ENCODE measurements at regions of chr9 and their contacts with region 1.

Region 1: DNA sequence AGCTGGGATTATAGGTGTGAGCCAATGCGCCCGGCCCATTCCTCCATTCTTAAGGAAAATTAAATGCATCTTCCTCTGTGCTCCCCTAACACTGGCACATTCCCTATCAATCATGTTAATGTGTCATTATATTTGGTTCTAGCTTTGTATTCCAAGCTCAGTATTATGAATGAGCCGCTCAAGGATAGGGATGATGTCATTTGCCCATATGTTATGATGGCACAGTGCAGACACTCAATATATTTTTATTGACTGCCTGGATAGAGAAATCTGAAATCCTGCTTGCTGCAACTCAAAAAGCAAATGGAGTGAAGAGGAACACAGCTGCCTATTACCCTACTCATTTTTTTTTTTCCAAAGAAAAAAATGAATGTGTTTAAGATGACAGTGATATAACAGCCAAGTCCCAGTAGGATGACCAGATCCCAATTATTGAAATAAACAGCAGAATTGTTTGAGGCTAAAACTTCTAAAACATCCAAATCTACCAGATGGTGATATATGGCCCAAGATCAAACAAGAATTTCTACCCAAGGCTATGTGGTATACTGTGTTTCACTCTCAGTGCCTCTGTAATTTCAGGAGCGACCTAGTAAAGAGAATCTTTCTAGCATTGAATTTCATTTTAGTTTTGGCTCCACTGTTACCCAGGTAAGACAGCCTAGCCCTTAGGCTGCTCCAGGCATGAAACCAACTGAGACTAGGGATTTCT is 16.3 kb downstream of the SUSD1 start:
- DNase-seq: no peak
- H3K4me3 ChIP-seq: no peak overlapping the region
- H3K4me3 Mint-ChIP-seq: no peak overlapping the region
- H3K27ac ChIP-seq: no peak overlapping the region
- H3K27ac Mint-ChIP-seq: no peak overlapping the region
- H3K4me1 ChIP-seq: no peaks in the 10 kb centered on the region
- H3K4me1 Mint-ChIP-seq: peaks cover 0 to 5% (median 2%) of the 10 kb centered on the region in 4 donors
- H3K27me3 ChIP-seq: no peaks in the 10 kb centered on the region
- H3K27me3 Mint-ChIP-seq: no peaks in the 10 kb centered on the region

Region 2: GRCh38 chr9:112218908-112219307 is 60.1 kb after region 1 on chr9:
- CTCF ChIA-PET with region 1: no interaction called
- POLR2A ChIA-PET with region 1: no interaction called
- intact Hi-C with region 1: loop called (anchors 10 kb)
- DNase-seq: peak in 1 of 5 donors; percentile 2
- H3K4me3 ChIP-seq: no peak overlapping the region
- H3K4me3 Mint-ChIP-seq: peak overlapping the region in 7 of 8 donors; percentile 14 to 71 (median 50)
- H3K27ac ChIP-seq: peak overlapping the region; percentile 11
- H3K27ac Mint-ChIP-seq: peak overlapping the region; percentile 48 to 79 (median 73)
- H3K4me1 ChIP-seq: peaks cover 11% of the 10 kb centered on the region
- H3K4me1 Mint-ChIP-seq: peaks cover 13 to 32% (median 23%) of the 10 kb centered on the region in 4 donors
- H3K27me3 ChIP-seq: no peaks in the 10 kb centered on the region
- H3K27me3 Mint-ChIP-seq: no peaks in the 10 kb centered on the region

Measured in CD4-positive, alpha-beta memory T cell (primary cell).